ENCODE measurements at regions of chr12 and their contacts with region 1.

Region 1: DNA sequence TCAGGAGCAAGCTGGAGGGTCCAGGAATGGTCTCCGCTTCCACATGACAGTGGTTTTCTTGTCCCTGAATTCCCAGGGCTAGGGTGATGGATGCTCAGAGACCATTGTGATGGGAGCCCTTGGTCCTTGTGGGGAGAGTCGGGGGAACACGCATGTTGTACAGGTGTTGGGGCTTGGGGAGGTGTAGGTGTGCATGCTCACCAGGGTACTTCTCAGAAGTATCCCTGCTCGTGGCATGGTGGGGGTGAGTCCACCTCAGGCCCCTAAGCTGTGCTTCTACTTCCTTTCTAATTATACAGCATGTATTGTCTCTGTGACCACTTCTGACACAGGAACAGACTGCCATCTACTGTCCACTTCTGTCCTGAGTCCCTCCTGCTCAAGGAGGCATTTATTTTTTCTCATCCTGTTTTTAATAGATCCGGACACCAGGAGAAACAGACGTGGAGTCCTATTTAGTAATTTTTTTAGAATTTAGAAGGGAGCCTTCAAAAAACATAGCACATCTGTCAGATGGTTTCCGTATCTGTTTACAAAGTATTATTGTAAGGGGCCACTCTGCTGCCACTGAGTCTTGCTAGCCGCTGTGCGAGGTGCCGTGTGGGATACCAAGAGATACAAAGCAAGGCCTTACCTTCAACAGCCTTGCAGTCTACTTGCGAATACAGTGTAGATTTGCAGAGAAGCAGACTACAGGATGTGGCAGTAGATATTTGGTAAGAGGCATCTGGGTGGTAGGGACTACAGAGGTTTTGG is 10.5 kb downstream of the NTF3 start:
- DNase-seq: no peak
- ATAC-seq: peak; percentile 74 to 85

Region 2: DNA sequence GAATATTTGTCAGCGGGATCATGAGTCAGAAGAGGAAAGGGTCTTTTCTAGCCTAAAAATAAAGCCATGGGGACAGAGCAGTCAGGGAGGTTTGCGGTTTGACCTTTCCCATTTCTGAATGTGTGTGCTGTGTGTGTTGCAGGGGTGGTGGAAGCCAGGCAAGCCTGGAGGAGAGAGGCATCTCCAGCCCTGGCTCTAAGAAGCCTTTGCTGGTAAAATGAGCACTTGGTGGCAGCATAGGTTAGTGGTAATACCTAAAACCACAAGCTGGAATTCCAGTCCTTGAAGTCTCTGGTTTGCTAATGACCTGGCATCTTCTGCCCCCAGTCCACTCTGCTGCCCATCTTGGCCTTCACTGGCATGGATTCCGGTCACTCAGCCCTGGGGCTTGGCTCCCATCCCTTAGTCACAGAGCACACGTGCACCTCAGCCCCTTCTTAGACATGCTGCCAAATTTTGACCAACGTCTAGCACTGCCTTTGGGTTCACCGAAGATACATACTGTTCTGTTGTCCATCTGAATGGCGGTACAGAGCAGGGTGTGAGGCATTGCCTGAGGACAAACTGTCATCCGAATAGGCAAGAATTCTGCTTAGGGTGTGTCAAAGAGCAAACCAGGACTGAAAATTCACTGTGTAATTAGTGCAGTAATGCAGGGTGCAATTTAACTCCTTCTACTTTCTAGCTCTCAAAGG is 346.0 kb before region 1 on chr12:
- intact Hi-C with region 1: loop called in 1 of 2 experiments (anchors 5 kb)
- DNase-seq: no peak
- ATAC-seq: no peak

Region 3: GRCh38 chr12:5171701-5172100 is 270.7 kb before region 1 on chr12:
- intact Hi-C with region 1: loop called (anchors 2 to 5 kb)
- DNase-seq: no peak
- ATAC-seq: peak; percentile 28 to 66

Region 4: DNA sequence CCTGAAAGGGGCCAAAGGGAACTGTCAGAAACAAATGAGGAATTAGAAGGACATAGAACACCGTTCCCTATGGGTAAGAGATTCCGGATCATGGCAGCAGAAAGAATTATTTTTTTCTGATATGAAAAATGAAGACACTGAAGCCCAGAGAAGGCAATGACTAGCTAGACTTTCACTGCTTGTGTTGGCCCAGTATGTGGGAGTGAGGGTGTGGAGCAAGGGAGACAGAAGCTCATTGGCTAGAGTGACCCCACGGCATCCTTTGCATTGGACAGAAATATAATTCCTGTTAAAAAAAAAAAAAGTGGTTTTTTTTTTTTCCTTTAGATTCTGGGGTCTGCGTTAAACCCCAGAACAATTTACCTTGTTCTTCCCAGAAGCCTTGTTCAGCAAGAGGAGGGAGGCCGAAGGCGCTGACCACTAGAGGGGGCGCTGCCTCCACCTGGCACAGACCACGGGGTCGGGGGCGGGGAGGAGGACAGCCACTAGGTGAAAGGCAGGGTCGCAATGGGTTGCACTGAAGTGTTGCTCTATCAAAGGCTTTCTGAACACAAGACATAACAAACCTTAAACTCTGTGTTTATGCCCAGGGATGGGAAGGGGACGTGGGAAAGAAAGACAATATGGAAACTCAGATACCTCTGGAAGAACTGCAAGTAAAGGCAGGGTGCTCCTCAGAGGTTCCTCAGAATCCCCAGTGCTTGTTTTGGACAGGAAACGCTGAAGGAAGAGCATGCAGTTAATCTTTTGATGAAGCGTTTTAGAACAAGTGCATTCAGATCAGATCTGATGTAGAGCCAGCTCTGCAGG is 241.9 kb before region 1 on chr12:
- intact Hi-C with region 1: loop called (anchors 2 to 5 kb)
- DNase-seq: peak; percentile 53
- ATAC-seq: peak; percentile 71 to 78